Activated CD8-positive, alpha-beta T cell treated with anti-CD3 and anti-CD28 coated beads for 36 hours (primary cell): ENCODE measurements at regions of chr9 and their contacts with region 1.

Region 1: GRCh38 chr9:96232539-96233241 is 69.3 kb downstream of the HSD17B3 start:
- DNase-seq: peak; percentile 56
- ATAC-seq: peak; percentile 84
- H3K4me3 Mint-ChIP-seq: no peak overlapping the region
- H3K27ac Mint-ChIP-seq: no peak overlapping the region
- H3K4me1 Mint-ChIP-seq: no peaks in the 10 kb centered on the region
- H3K27me3 Mint-ChIP-seq: peaks cover 43% of the 10 kb centered on the region
- CTCF ChIP-seq: peak; percentile 90

Region 2: GRCh38 chr9:96217754-96218693 is 14.7 kb before region 1 on chr9:
- CTCF ChIA-PET with region 1: interaction called, 13 read pairs
- POLR2A ChIA-PET with region 1: no interaction called
- intact Hi-C with region 1: no loop called
- DNase-seq: peak; percentile 78
- ATAC-seq: peak; percentile 90
- H3K4me3 Mint-ChIP-seq: peak overlapping the region; percentile 40
- H3K27ac Mint-ChIP-seq: peak overlapping the region; percentile 61
- H3K4me1 Mint-ChIP-seq: peaks cover 8% of the 10 kb centered on the region
- H3K27me3 Mint-ChIP-seq: peaks cover 56% of the 10 kb centered on the region
- CTCF ChIP-seq: peak; percentile 99

Region 3: GRCh38 chr9:96245399-96245798 is 12.7 kb after region 1 on chr9:
- CTCF ChIA-PET with region 1: interaction called, 24 read pairs
- POLR2A ChIA-PET with region 1: interaction called, 3 read pairs
- intact Hi-C with region 1: no loop called
- DNase-seq: peak; percentile 22
- ATAC-seq: no peak
- H3K4me3 Mint-ChIP-seq: no peak overlapping the region
- H3K27ac Mint-ChIP-seq: no peak overlapping the region
- H3K4me1 Mint-ChIP-seq: peaks cover 14% of the 10 kb centered on the region
- H3K27me3 Mint-ChIP-seq: peaks cover 46% of the 10 kb centered on the region
- CTCF ChIP-seq: no peak

Region 4: DNA sequence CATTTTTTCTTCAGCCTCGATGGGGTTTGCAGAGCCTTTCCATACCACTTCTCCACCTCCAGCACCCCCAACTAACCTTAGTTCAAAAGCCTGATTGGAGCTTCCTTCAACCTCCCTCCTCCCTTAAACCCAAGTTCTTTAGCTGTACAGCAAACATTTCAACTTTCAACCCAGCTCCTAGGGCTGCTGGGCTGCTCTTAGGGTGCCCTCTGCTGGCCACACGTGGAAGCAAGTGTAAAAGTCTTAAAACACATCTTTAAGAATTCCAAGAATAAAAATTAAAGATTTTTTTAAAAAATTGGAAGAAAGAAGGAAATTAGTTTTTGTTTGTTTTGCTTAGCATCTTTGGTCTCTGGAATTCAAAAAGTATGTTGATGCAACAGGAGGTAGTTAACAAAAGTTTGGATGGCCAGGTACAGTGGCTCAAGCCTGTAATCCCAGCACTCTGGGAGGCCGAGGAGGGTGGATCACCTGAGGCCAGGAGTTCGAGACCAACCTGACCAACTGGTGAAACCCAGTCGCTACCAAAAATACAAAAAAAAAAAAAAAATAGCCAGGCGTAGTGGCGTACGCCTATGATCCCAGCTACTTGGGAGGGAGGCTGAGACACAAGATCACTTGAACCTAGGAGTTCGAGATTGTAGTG is 84.8 kb after region 1 on chr9:
- CTCF ChIA-PET with region 1: interaction called, 45 read pairs
- POLR2A ChIA-PET with region 1: interaction called, 3 read pairs
- intact Hi-C with region 1: loop called (anchors 5 kb)
- DNase-seq: peak; percentile 31
- ATAC-seq: no peak
- H3K4me3 Mint-ChIP-seq: no peak overlapping the region
- H3K27ac Mint-ChIP-seq: no peak overlapping the region
- H3K4me1 Mint-ChIP-seq: no peaks in the 10 kb centered on the region
- H3K27me3 Mint-ChIP-seq: peaks cover 6% of the 10 kb centered on the region
- CTCF ChIP-seq: peak; percentile 73